HCT116 (cell line): ENCODE measurements at regions of chr3 and their contacts with region 1.

Region 1: DNA sequence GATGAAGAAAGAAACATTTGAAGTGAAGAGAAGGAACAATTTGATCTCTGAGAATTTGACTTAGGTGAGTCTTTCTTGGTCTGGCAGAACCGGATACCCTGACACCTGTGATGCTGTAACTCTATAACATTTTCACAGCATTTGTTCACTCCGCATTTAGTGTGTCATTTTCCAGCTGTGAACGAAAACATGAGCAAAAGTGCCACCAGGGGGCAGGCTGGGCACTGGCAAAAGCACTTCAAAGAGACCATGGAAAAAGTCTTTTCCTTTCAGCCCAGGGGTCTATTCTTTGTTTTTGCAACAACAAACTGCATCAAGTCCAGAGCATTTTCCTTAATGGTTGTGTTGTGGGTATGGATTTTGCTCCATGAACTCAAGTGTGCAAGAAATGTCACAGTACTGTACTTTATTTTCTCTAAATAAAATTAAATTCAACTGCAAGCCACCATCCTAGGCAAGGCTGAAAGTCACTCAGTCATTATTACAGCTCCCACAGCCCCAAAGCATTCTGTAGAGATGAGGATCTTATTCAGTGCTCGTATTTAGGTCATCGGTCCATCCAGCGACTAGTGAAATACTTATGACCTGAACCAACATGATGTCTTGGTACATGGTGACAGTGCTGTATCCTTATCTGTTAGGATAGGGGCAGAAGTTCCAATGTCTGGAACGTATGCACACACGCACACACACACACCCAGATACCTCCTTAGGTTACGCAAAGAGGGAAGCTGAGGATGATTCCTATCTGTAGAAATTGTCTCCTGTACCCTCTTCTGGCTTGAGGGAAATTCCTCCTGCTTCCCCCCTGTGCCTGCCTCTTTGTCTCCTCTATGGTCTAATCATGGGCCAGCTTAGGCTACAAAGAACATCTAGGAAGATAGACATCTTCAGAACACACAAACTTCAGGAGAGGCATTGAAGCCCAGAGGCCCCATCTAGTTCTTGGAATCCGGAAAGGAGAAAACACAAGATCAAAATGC is 125.5 kb downstream of the GADL1 start:
- DNase-seq: peak; percentile 51
- ATAC-seq: peak; percentile 57
- H3K4me3 ChIP-seq: no peak overlapping the region
- H3K27ac ChIP-seq: no peak overlapping the region
- H3K4me1 ChIP-seq: peaks cover 6 to 13% of the 10 kb centered on the region in 2 experiments; a peak in 3 of 4 replicates
- H3K27me3 ChIP-seq: no peaks in the 10 kb centered on the region
- CTCF ChIP-seq: peak; percentile 57 to 90 (median 77); a peak in 5 of 6 replicates
- POLR2A ChIP-seq: no peak
- RAD21 ChIP-seq: peak; percentile 82

Region 2: GRCh38 chr3:28972921-28973320 is 1796.1 kb before region 1 on chr3:
- CTCF ChIA-PET with region 1: no interaction called
- POLR2A ChIA-PET with region 1: no interaction called
- RAD21 ChIA-PET with region 1: no interaction called
- intact Hi-C with region 1: no loop called
- DNase-seq: no peak
- ATAC-seq: no peak
- H3K4me3 ChIP-seq: no peak overlapping the region
- H3K27ac ChIP-seq: no peak overlapping the region
- H3K4me1 ChIP-seq: no peaks in the 10 kb centered on the region
- H3K27me3 ChIP-seq: no peaks in the 10 kb centered on the region
- CTCF ChIP-seq: no peak
- POLR2A ChIP-seq: no peak
- RAD21 ChIP-seq: no peak

Region 3: GRCh38 chr3:31448035-31448881 is 679.3 kb after region 1 on chr3:
- CTCF ChIA-PET with region 1: no interaction called
- POLR2A ChIA-PET with region 1: no interaction called
- RAD21 ChIA-PET with region 1: no interaction called
- intact Hi-C with region 1: loop called (anchors 5 kb)
- DNase-seq: peak; percentile 24
- ATAC-seq: peak; percentile 97
- H3K4me3 ChIP-seq: no peak overlapping the region
- H3K27ac ChIP-seq: no peak overlapping the region
- H3K4me1 ChIP-seq: peaks cover 0 to 9% of the 10 kb centered on the region in 2 experiments; a peak in 1 of 4 replicates
- H3K27me3 ChIP-seq: no peaks in the 10 kb centered on the region
- CTCF ChIP-seq: peak; percentile 35 to 93 (median 78); a peak in 5 of 6 replicates
- POLR2A ChIP-seq: no peak
- RAD21 ChIP-seq: peak; percentile 72